Heart right ventricle (tissue), 16 donors: ENCODE measurements at regions of chr4 and their contacts with region 1.

Region 1: DNA sequence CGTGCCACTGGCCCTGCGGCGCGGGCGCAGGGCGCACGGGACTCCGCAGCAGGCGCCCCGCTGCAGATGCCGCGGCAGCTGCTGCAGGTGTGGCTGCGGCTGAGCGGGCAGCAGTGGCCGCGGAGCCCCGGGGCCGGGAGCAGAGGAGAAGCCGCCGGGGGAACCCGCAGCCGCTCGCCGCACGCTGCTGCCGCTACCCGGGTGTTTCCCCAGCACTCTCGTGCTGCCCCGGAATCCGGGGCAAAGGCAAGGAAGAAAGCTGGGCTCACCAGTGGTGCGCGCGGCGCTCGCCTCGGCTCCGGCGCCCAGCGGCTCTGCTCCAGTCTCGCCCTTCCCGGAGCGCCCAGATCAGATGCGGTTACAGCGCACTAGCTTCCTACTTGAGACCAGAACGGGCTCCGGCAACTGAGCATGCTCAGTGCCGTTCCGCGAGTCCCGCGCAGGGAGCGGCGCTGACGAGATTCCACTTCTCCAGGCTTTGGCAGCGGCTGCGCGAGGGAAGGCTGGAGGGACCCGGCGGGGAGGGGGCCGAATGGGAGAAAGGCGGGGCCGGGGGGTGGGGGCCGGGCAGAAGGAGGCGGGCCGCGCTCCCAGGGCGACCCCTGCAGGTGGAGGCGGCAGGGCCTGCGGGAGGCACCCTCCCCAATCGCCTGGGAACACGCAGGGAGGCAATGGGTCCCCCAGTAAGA is at the start of gene APBB2:
- DNase-seq: peak; percentile 95 to 96
- ATAC-seq: peak; percentile 93 to 96 (median 94)
- H3K4me3 ChIP-seq: peak within 1 kb of the TSS; percentile 64 to 98 (median 92)
- H3K27ac ChIP-seq: peak within 1 kb of the TSS; percentile 81 to 96 (median 88)
- H3K4me1 ChIP-seq: peaks cover 0 to 69% (median 38%) of the 10 kb centered on the region in 9 donors
- H3K27me3 ChIP-seq: peaks cover 0 to 53% (median 0%) of the 10 kb centered on the region in 7 donors
- CTCF ChIP-seq: peak; percentile 84 to 96 (median 94)
- total RNA-seq, gene APBB2: 22.3 to 35.4 (median 27.8) TPM

Region 2: GRCh38 chr4:40908702-40909362 is 305.4 kb before region 1 on chr4:
- intact Hi-C with region 1: loop called in 2 of 10 experiments (anchors 5 kb)
- DNase-seq: peak; percentile 48 to 57
- ATAC-seq: peak; percentile 56 to 93 (median 81)
- H3K4me3 ChIP-seq: no peak overlapping the region
- H3K27ac ChIP-seq: peak overlapping the region in 4 of 10 donors; percentile 3 to 63 (median 36)
- H3K4me1 ChIP-seq: peaks cover 0 to 27% (median 13%) of the 10 kb centered on the region in 9 donors
- H3K27me3 ChIP-seq: no peaks in the 10 kb centered on the region
- CTCF ChIP-seq: peak; percentile 76 to 97 (median 87)

Region 3: GRCh38 chr4:40976343-40976742 is 237.9 kb before region 1 on chr4:
- intact Hi-C with region 1: loop called (anchors 1 to 5 kb)
- DNase-seq: peak in 1 of 2 donors; percentile 59
- ATAC-seq: peak in 4 of 8 donors; percentile 31 to 71 (median 64)
- H3K4me3 ChIP-seq: no peak overlapping the region
- H3K27ac ChIP-seq: peak overlapping the region in 1 of 10 donors; percentile 15
- H3K4me1 ChIP-seq: peaks cover 0 to 9% (median 0%) of the 10 kb centered on the region in 9 donors
- H3K27me3 ChIP-seq: no peaks in the 10 kb centered on the region
- CTCF ChIP-seq: peak; percentile 63 to 89 (median 78)

Region 4: GRCh38 chr4:41057467-41057866 is 156.8 kb before region 1 on chr4:
- intact Hi-C with region 1: loop called in 4 of 10 experiments (anchors 5 to 10 kb)
- DNase-seq: no peak
- ATAC-seq: no peak
- H3K4me3 ChIP-seq: no peak overlapping the region
- H3K27ac ChIP-seq: peak overlapping the region in 2 of 10 donors; percentile 17 to 42
- H3K4me1 ChIP-seq: peaks cover 12 to 48% (median 15%) of the 10 kb centered on the region in 9 donors
- H3K27me3 ChIP-seq: no peaks in the 10 kb centered on the region
- CTCF ChIP-seq: no peak

Region 5: GRCh38 chr4:41143311-41144039 is 70.8 kb before region 1 on chr4:
- intact Hi-C with region 1: loop called in 4 of 10 experiments (anchors 5 to 10 kb)
- DNase-seq: peak in 1 of 2 donors; percentile 64
- ATAC-seq: peak; percentile 59 to 87 (median 83)
- H3K4me3 ChIP-seq: peak overlapping the region in 4 of 10 donors; percentile 5 to 18 (median 11)
- H3K27ac ChIP-seq: peak overlapping the region; percentile 50 to 87 (median 72)
- H3K4me1 ChIP-seq: peaks cover 0 to 68% (median 52%) of the 10 kb centered on the region in 9 donors
- H3K27me3 ChIP-seq: no peaks in the 10 kb centered on the region
- CTCF ChIP-seq: no peak

Region 6: GRCh38 chr4:41514766-41515481 is 300.6 kb after region 1 on chr4:
- intact Hi-C with region 1: no loop called
- DNase-seq: no peak
- ATAC-seq: peak in 4 of 8 donors; percentile 9 to 57 (median 24)
- H3K4me3 ChIP-seq: no peak overlapping the region
- H3K27ac ChIP-seq: peak overlapping the region in 1 of 10 donors; percentile 48
- H3K4me1 ChIP-seq: peaks cover 0 to 31% (median 7%) of the 10 kb centered on the region in 9 donors
- H3K27me3 ChIP-seq: no peaks in the 10 kb centered on the region
- CTCF ChIP-seq: no peak